ENCODE measurements at regions of chr10 and their contacts with region 1.

Region 1: GRCh38 chr10:86936661-86937501 is 20.5 kb downstream of the MMRN2 start:
- DNase-seq: no peak
- H3K4me3 ChIP-seq: no peak overlapping the region
- H3K27ac ChIP-seq: no peak overlapping the region
- H3K4me1 ChIP-seq: peaks cover 8% of the 10 kb centered on the region
- H3K27me3 ChIP-seq: no peaks in the 10 kb centered on the region
- CTCF ChIP-seq: no peak

Region 2: DNA sequence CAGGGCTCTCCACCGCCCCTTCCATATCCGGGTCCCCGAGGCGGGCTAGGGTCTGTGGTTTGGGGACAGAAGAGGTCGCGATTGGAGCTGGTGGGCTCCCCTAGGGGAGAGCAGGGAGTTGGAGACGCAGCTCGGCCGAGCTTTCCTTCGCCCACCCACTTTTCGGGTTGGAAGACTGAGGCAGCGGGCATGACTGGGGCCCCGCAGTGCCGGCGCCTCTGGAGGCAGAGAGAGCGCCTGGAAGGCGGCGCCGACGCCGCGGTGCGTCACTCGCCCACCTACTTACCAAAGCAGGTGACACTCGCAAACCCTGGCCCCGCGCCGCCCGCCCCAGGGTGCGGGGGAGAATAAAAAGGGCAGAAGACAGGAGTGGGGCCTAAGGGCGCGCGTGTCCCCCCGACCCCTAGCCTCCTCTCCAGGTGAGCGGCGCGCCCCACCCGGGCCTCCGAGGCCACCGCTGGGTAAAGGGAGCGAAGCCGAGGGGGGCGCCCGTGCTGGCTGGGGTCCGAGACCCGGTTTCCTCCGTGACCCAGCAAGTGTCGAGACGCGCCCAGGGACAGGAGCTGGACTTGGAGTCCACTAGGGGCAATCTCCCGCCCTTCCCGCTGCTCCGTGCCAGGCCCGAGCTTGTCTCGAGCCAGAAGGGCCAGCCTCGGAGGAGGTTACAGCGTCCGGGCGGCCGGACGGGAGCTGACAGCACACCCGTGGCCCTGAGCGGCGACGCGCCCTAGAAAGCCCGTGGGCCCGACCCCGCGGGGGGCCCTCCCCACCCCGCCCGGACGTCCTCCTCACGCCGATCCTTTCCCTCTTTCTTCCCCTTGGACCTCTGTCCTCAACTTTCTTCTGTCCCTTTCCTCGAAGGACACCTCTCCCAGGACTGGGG is 535.9 kb before region 1 on chr10:
- CTCF ChIA-PET with region 1: no interaction called
- dilution Hi-C with region 1: no loop called
- in situ Hi-C with region 1: no loop called
- intact Hi-C with region 1: no loop called
- DNase-seq: peak; percentile 25
- H3K4me3 ChIP-seq: peak overlapping the region; percentile 68 to 83 (median 79)
- H3K27ac ChIP-seq: peak overlapping the region; percentile 22
- H3K4me1 ChIP-seq: peaks cover 31% of the 10 kb centered on the region
- H3K27me3 ChIP-seq: no peaks in the 10 kb centered on the region
- CTCF ChIP-seq: no peak

Region 3: DNA sequence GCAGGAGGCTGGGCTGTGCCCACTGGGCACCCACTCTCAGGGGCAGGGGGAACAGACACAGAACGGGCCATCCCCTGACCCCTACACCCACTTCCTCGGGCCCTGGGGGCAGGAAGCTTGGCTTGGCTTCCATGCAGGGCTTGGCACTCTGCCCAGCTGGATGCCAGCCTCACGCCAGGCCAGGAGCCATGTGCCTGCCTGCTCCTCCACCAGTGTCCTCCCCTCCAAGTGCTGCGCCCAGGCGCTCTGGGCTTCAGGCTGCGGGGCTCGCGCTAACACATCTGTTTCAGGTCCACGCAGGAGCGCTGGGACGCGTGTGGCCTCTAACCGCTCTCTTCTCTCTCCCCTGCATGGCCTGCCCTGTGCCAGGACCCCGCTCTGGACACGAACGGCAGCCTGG is 255.8 kb before region 1 on chr10:
- CTCF ChIA-PET with region 1: interaction called, 26 read pairs
- dilution Hi-C with region 1: no loop called
- in situ Hi-C with region 1: no loop called
- intact Hi-C with region 1: no loop called
- DNase-seq: no peak
- H3K4me3 ChIP-seq: no peak overlapping the region
- H3K27ac ChIP-seq: no peak overlapping the region
- H3K4me1 ChIP-seq: peaks cover 7% of the 10 kb centered on the region
- H3K27me3 ChIP-seq: no peaks in the 10 kb centered on the region
- CTCF ChIP-seq: no peak

Region 4: GRCh38 chr10:86960003-86960862 is 23.4 kb after region 1 on chr10:
- CTCF ChIA-PET with region 1: no interaction called
- dilution Hi-C with region 1: no loop called
- in situ Hi-C with region 1: no loop called
- intact Hi-C with region 1: loop called (anchors 1 kb)
- DNase-seq: peak; percentile 49
- H3K4me3 ChIP-seq: no peak overlapping the region
- H3K27ac ChIP-seq: peak overlapping the region; percentile 71
- H3K4me1 ChIP-seq: peaks cover 51% of the 10 kb centered on the region
- H3K27me3 ChIP-seq: no peaks in the 10 kb centered on the region
- CTCF ChIP-seq: peak; percentile 99 to 100

Region 5: GRCh38 chr10:86965986-86966654 is 29.2 kb after region 1 on chr10:
- CTCF ChIA-PET with region 1: no interaction called
- dilution Hi-C with region 1: no loop called
- in situ Hi-C with region 1: no loop called
- intact Hi-C with region 1: loop called (anchors 1 kb)
- DNase-seq: no peak
- H3K4me3 ChIP-seq: peak overlapping the region in 1 of 3 experiments; percentile 21
- H3K27ac ChIP-seq: peak overlapping the region; percentile 16
- H3K4me1 ChIP-seq: peaks cover 57% of the 10 kb centered on the region
- H3K27me3 ChIP-seq: no peaks in the 10 kb centered on the region
- CTCF ChIP-seq: no peak

Measured in mammary epithelial cell (primary cell).